Activated naive CD4-positive, alpha-beta T cell treated with anti-CD3 and anti-CD28 coated beads for 36 hours (primary cell): ENCODE measurements at regions of chr9 and their contacts with region 1.

Region 1: DNA sequence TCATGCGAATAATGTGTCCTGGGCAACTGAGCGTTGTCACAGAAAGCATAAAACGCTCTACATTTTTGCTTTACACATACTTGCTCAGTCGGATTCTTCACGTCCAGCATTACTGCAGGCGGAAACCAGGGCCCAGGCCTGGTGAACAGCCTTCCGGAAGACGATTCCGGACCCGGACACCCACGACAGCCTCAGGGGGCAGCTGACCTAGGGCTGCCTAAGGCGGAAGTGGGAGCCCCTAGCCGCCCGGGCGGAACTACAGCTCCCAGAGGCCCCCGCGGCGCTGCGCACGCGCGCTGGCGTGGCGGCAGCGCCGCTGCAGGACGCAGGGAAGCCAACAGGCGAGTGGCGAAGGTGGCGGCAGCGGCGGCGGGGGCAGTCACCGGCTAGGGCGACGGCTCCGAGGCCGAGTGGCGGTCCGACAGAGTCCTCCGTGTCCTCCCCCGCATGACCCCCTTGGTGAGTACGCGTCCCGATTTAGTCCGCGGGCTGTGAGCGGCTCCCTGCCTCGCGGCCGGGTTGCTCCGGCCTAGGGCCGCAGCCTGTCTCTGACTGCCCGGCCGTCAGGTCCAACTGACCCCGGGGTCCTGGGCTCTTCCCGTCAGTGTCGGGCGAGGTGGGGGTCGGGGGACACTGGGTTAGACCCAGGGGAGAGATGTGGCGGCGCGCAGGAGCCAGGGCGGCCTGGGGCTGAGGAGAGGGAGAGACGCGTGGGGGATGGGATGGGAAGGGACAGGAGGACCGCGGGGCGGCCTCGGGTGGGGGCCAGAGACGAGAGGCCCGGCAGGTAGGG is at the start of gene GAPVD1:
- DNase-seq: peak; percentile 90
- H3K4me3 Mint-ChIP-seq: peak within 1 kb of the TSS; percentile 98
- H3K27ac Mint-ChIP-seq: peak within 1 kb of the TSS; percentile 86
- H3K4me1 Mint-ChIP-seq: peaks cover 31% of the 10 kb centered on the region
- H3K27me3 Mint-ChIP-seq: no peaks in the 10 kb centered on the region
- total RNA-seq, gene GAPVD1: 38.1 to 40.0 TPM

Region 2: GRCh38 chr9:124861342-124862229 is 400.1 kb before region 1 on chr9 and contains the starts of genes ARPC5L and RPL35:
- CTCF ChIA-PET with region 1: interaction called, 3 read pairs
- intact Hi-C with region 1: loop called (anchors 5 kb)
- DNase-seq: peak; percentile 96
- H3K4me3 Mint-ChIP-seq: peak within 1 kb of the TSS; percentile 87
- H3K27ac Mint-ChIP-seq: peak within 1 kb of the TSS; percentile 95
- H3K4me1 Mint-ChIP-seq: peaks cover 46% of the 10 kb centered on the region
- H3K27me3 Mint-ChIP-seq: no peaks in the 10 kb centered on the region
- total RNA-seq, gene ARPC5L: 116 to 123 TPM
- total RNA-seq, gene RPL35: 2,701 to 2,729 TPM

Region 3: GRCh38 chr9:125200210-125201047 is 61.3 kb before region 1 on chr9 and contains the start of gene RABEPK:
- CTCF ChIA-PET with region 1: no interaction called
- intact Hi-C with region 1: loop called (anchors 2 kb)
- DNase-seq: peak; percentile 91
- H3K4me3 Mint-ChIP-seq: peak within 1 kb of the TSS; percentile 91
- H3K27ac Mint-ChIP-seq: peak within 1 kb of the TSS; percentile 81
- H3K4me1 Mint-ChIP-seq: peaks cover 39% of the 10 kb centered on the region
- H3K27me3 Mint-ChIP-seq: no peaks in the 10 kb centered on the region
- total RNA-seq, gene RABEPK: 18.4 to 19.8 TPM

Region 4: GRCh38 chr9:125332527-125332926 is 70.8 kb after region 1 on chr9:
- CTCF ChIA-PET with region 1: no interaction called
- intact Hi-C with region 1: loop called (anchors 2 kb)
- DNase-seq: peak; percentile 71
- H3K4me3 Mint-ChIP-seq: no peak overlapping the region
- H3K27ac Mint-ChIP-seq: peak overlapping the region; percentile 55
- H3K4me1 Mint-ChIP-seq: peaks cover 12% of the 10 kb centered on the region
- H3K27me3 Mint-ChIP-seq: no peaks in the 10 kb centered on the region